WTC11 (cell line): ENCODE measurements at regions of chr12 and their contacts with region 1.

Region 1: GRCh38 chr12:52121824-52122539 is 42.5 kb downstream of the SMIM41 start:
- DNase-seq: peak; percentile 84
- ATAC-seq: peak; percentile 4; the same call in 1 of the 2 replicates
- H3K4me3 Mint-ChIP-seq: peak overlapping the region; percentile 50
- H3K27ac Mint-ChIP-seq: no peak overlapping the region
- H3K4me1 Mint-ChIP-seq: peaks cover 84% of the 10 kb centered on the region
- H3K27me3 Mint-ChIP-seq: peaks cover 7% of the 10 kb centered on the region; the same call in 1 of the 2 replicates
- CTCF ChIP-seq: peak; percentile 63

Region 2: DNA sequence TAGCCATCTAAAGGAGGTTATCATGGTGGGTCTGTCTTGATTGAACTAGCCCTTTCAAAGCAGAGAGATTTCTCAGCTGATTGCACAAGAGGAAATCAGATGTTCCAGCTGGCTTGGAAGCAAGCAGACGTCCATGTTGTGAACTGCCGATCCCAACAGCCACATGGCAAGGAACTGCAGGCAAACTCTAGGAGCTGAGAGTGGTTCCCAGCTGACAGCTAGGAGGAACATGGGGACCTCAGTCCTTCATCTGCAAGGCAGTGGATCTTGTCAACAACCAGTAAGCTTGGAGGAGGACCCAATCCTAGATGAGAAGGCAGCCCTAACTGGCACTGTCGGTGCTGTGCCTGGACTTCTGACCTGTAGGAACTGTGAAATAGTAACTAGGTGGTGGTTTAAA is 162.8 kb before region 1 on chr12:
- CTCF ChIA-PET with region 1: no interaction called
- POLR2A ChIA-PET with region 1: no interaction called
- DNase-seq: no peak
- ATAC-seq: no peak
- H3K4me3 Mint-ChIP-seq: no peak overlapping the region
- H3K27ac Mint-ChIP-seq: no peak overlapping the region
- H3K4me1 Mint-ChIP-seq: peaks cover 13% of the 10 kb centered on the region
- H3K27me3 Mint-ChIP-seq: peaks cover 1% of the 10 kb centered on the region
- CTCF ChIP-seq: no peak

Region 3: GRCh38 chr12:52032804-52033502 is 89.0 kb before region 1 on chr12:
- CTCF ChIA-PET with region 1: interaction called, 435 read pairs
- POLR2A ChIA-PET with region 1: interaction called, 7 read pairs
- DNase-seq: peak; percentile 97
- ATAC-seq: peak; percentile 93
- H3K4me3 Mint-ChIP-seq: peak overlapping the region; percentile 69
- H3K27ac Mint-ChIP-seq: peak overlapping the region; percentile 95
- H3K4me1 Mint-ChIP-seq: peaks cover 31% of the 10 kb centered on the region
- H3K27me3 Mint-ChIP-seq: peaks cover 46% of the 10 kb centered on the region
- CTCF ChIP-seq: no peak

Region 4: DNA sequence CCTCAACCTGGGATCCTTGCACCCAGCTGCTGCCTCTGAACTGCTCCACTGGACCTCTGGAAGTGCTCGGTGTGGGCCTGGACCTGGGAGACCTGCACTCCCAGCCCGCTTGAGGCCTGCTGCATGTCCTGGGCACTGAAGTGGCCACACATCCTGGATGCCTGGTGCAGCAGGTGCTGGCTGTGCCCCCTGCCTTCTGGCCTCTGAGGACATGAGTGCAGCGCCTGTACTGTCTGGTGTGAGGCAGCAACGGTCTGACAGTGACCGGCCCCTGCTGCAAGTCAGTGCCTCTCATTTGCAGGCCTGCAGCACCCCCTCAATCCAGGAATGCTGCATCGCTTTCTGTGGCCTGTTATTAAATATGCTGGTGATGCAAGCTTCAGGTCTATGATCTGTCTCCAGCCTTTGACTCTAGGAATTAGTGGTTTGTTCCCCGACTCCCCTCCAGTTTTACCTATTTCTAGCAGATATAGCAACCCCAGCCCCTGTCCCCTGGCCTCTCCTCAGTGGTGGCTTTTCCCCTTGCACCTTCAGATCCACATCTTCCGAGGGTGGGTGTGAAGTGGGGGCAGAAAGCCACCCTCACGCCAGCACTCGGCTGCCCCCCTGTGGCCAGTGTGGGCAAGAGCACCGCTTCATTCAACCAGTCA is 38.9 kb before region 1 on chr12:
- CTCF ChIA-PET with region 1: interaction called, 54 read pairs
- POLR2A ChIA-PET with region 1: interaction called, 3 read pairs
- DNase-seq: peak; percentile 83
- ATAC-seq: peak; percentile 46
- H3K4me3 Mint-ChIP-seq: no peak overlapping the region
- H3K27ac Mint-ChIP-seq: no peak overlapping the region
- H3K4me1 Mint-ChIP-seq: peaks cover 19% of the 10 kb centered on the region
- H3K27me3 Mint-ChIP-seq: no peaks in the 10 kb centered on the region
- CTCF ChIP-seq: peak; percentile 92

Region 5: GRCh38 chr12:52139552-52140062 is 17.6 kb after region 1 on chr12:
- CTCF ChIA-PET with region 1: interaction called, 27 read pairs
- POLR2A ChIA-PET with region 1: no interaction called
- DNase-seq: peak; percentile 77
- ATAC-seq: peak; percentile 84
- H3K4me3 Mint-ChIP-seq: no peak overlapping the region
- H3K27ac Mint-ChIP-seq: 0 out of 2 replicates have a peak overlapping the region, but pooled peaks have one; percentile 35
- H3K4me1 Mint-ChIP-seq: peaks cover 30% of the 10 kb centered on the region
- H3K27me3 Mint-ChIP-seq: no peaks in the 10 kb centered on the region; the same call in none of the 2 replicates
- CTCF ChIP-seq: peak; percentile 67

Region 6: GRCh38 chr12:52181746-52182145 is 59.8 kb after region 1 on chr12:
- CTCF ChIA-PET with region 1: no interaction called
- POLR2A ChIA-PET with region 1: no interaction called
- DNase-seq: peak; percentile 36
- ATAC-seq: peak; percentile 68
- H3K4me3 Mint-ChIP-seq: no peak overlapping the region
- H3K27ac Mint-ChIP-seq: peak overlapping the region; percentile 69; the same call in 1 of the 2 replicates
- H3K4me1 Mint-ChIP-seq: peaks cover 32% of the 10 kb centered on the region
- H3K27me3 Mint-ChIP-seq: no peaks in the 10 kb centered on the region; the same call in 1 of the 2 replicates
- CTCF ChIP-seq: no peak